Activated T-helper 2 cell treated with anti-CD3 and anti-CD28 coated beads, Interferon-gamma antibody, Interleukin-2, Interleukin-4, amounts not matched to agents 10 μg/mL and 5 μg/mL and 100 μg/mL, durations not matched to agents 14 hours and 24 hours and 36 hours (primary cell): ENCODE measurements at regions of chr3 and their contacts with region 1.

Region 1: GRCh38 chr3:40524568-40525285 is at the start of gene ZNF621:
- DNase-seq: peak; percentile 80
- H3K4me3 Mint-ChIP-seq: peak within 1 kb of the TSS; percentile 95
- H3K27ac Mint-ChIP-seq: peak within 1 kb of the TSS; percentile 96
- H3K4me1 Mint-ChIP-seq: peaks cover 22% of the 10 kb centered on the region
- H3K27me3 Mint-ChIP-seq: no peaks in the 10 kb centered on the region
- total RNA-seq, gene ZNF621: 21.4 and 23.9 TPM in 2 replicates

Region 2: GRCh38 chr3:40211579-40211978 is 313.1 kb before region 1 on chr3:
- intact Hi-C with region 1: no loop called
- DNase-seq: no peak
- H3K4me3 Mint-ChIP-seq: no peak overlapping the region
- H3K27ac Mint-ChIP-seq: no peak overlapping the region
- H3K4me1 Mint-ChIP-seq: no peaks in the 10 kb centered on the region
- H3K27me3 Mint-ChIP-seq: no peaks in the 10 kb centered on the region

Region 3: DNA sequence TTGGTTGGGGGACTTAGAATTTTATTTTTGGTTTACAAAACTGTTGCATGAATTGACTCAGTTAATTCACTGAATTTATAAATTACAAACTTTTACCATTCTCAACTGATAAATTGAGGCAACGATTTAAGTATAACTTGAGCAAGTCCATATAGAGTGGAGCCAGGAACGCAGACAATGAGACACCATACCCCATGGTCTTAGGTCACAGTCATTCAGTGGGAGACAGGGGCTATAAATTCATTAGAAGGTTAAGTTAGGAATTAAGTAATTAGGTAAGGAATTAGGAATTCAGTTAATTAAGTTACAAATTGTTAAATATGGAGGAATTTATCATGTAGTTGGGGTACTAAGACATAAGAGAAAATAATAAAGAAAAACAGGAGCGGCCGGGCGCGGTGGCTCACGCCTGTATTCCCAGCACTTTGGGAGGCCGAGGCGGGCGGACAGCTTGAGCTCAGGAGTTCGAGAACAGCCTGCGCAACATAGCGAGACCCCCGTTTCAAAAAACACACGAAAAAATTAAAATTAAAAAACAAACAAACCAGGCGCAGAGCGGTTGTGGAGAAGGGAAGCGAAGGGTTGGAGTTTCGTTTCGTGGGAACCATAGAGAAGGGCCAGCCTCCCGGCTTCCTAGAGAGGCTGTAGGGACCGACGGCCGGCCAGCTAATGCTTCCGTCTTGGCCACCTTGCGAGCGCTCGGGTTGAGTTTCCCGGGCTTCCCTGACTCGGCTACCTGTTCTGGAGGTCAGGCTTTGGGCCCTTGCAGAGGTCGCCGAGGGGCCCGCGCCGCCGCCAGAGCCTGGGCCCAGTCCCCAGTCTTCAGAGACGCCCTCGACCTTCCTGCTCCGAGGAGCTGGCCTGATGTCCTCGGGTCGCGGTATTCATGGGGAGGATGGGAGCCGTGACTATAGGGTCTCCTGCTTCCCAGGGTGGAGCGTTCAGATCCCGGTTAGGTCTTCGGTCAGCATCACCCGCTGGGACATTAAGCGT is 48.0 kb before region 1 on chr3 and contains the start of gene ZNF619:
- intact Hi-C with region 1: loop called (anchors 1 kb)
- DNase-seq: peak; percentile 49
- H3K4me3 Mint-ChIP-seq: peak within 1 kb of the TSS; percentile 83
- H3K27ac Mint-ChIP-seq: peak within 1 kb of the TSS; percentile 81
- H3K4me1 Mint-ChIP-seq: peaks cover 13% of the 10 kb centered on the region
- H3K27me3 Mint-ChIP-seq: peaks cover 3% of the 10 kb centered on the region
- total RNA-seq, gene ZNF619: 7.8 and 9.1 TPM in 2 replicates

Region 4: DNA sequence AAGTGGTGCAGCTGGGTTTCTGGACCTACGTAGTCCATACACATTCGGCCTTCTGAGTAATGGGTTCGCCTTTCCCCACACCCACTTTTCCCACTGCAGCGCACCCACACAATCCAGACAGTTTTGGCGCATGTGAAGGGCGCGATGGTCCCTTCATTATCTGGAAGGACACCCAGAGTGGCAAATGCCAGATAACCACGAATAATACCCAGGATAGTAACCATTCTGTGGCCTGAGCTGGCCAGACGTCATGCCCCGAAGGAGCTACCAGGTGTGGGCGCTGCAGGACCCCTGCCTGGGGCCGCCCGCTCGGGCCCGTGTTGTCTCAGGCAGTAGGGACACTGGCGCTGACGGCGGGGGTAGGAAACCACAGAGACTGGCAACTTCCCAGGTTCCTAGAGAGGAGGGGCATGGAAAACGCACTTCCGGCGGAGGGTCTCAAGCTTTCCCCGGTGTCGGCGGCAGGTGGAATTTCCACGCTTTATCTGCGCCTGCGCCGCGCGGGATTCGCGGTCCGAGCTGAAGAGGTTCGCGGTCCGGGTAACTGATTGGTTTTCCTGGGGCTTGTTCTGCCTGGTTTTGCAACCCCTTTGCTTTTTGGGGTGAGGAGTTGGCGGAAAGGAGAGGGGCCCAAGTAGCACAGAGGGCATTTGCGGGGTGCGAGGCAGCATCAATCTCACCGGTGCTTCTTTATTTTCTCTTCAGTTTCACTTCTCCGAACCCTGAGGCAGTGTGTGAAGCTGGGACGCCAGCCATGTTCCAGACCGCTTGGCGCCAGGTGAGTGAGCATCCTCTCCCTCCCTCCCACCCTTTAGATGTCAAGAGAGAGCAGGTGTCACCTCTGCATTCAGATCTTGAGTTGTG is 18.9 kb before region 1 on chr3 and contains the start of gene ZNF620:
- intact Hi-C with region 1: loop called (anchors 1 kb)
- DNase-seq: peak; percentile 28
- H3K4me3 Mint-ChIP-seq: peak within 1 kb of the TSS; percentile 87
- H3K27ac Mint-ChIP-seq: peak within 1 kb of the TSS; percentile 75
- H3K4me1 Mint-ChIP-seq: peaks cover 24% of the 10 kb centered on the region
- H3K27me3 Mint-ChIP-seq: no peaks in the 10 kb centered on the region
- total RNA-seq, gene ZNF620: 6.3 and 6.7 TPM in 2 replicates